ENCODE measurements at regions of chr12 and their contacts with region 1.

Region 1: GRCh38 chr12:109597795-109598427 is 24.3 kb downstream of the MVK start:
- DNase-seq: peak; percentile 61
- H3K4me3 ChIP-seq: no peak overlapping the region
- H3K27ac ChIP-seq: no peak overlapping the region
- H3K27me3 ChIP-seq: peaks cover 9% of the 10 kb centered on the region
- CTCF ChIP-seq: peak; percentile 97

Region 2: DNA sequence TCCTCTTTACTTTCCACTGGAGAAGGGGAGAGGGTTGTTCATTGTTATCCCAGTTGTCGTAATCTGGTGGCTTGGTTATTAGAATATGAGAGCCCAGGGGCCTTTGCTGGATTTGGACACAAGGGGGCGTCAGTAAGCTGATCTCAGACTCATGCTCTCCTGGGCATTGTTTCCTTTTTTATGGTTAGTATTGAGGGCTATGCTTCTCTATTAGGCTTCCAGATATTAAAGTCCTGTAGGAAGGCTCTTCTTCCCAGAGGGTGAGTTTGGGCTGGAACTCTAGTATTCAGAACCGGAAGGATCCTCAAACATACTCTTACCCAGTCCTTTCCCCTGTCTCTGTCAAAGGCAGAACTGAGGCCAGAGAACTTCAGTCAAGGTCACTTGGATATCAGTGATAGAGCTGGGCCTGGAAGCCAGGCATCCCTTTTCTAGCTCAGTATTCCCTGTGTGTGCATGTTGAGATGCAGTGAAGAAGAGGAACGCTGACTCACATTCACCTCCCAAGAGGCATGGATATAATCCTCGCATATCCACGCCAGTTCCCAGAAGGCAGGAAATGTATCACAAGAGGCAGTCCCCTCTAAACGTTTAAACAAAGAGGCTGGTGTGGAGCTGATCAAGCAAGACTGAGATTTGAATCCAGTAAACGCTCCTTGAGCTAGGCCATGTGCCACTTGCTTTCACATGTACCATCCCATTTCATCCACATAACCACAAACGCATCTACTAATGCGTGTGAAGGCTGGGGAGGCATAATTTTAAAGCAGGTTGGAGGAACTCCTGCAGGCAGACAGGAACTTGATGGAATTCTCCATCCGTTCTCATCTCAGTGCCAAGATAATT is 78.9 kb before region 1 on chr12:
- CTCF ChIA-PET with region 1: interaction called, 13 read pairs
- POLR2A ChIA-PET with region 1: no interaction called
- DNase-seq: peak; percentile 41
- H3K4me3 ChIP-seq: no peak overlapping the region
- H3K27ac ChIP-seq: peak overlapping the region; percentile 94
- H3K27me3 ChIP-seq: no peaks in the 10 kb centered on the region
- CTCF ChIP-seq: peak; percentile 93

Region 3: GRCh38 chr12:109566424-109566823 is 31.5 kb before region 1 on chr12:
- CTCF ChIA-PET with region 1: interaction called, 11 read pairs
- POLR2A ChIA-PET with region 1: no interaction called
- DNase-seq: no peak
- H3K4me3 ChIP-seq: no peak overlapping the region
- H3K27ac ChIP-seq: no peak overlapping the region
- H3K27me3 ChIP-seq: no peaks in the 10 kb centered on the region
- CTCF ChIP-seq: no peak

Region 4: DNA sequence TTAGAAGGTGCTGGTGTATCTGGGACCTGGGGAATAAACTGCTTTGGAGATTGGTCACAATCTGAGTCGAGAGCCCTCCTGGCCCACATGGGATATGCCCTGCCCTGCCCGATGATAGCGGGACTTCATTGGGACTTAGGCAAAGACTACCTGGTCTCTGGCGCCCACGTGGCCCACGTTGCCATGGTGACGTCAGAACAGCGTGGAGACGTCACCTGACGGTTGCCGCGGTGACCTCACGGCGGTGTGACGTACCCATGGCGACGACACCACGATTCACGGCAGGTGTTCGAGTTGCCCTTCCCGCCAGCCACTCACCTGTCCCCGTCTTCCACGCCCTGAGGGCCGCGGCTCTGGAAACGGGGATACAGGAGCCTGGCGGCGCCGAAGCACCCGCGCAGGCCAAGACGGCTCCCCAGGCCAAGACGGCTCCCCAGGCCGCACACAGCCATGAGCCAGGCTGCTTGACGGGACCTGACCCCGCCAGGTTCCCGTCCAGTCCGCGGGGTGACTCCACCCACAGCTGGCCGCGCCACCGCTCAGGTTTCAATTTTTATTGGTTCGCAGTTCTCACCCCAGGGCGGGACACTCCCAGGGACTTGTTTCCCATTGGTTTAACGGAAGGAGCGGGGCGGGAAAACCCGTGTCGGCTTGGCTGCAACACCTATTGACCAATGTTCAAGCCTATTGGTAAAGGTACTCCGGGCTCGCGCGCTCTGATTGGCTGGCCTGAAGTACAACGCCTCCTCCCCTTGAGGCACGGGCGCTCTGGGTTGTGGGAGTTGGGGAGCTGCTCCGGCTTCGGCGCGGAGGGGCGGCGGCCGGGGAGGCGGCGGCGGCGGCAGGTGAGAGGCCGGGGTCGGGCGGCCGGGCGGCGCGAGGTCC is 24.6 kb before region 1 on chr12 and contains the starts of genes MMAB and MVK:
- CTCF ChIA-PET with region 1: interaction called, 36 read pairs
- POLR2A ChIA-PET with region 1: interaction called, 3 read pairs
- DNase-seq: peak; percentile 96
- H3K4me3 ChIP-seq: peak within 1 kb of the TSS; percentile 78
- H3K27ac ChIP-seq: peak within 1 kb of the TSS; percentile 68
- H3K27me3 ChIP-seq: no peaks in the 10 kb centered on the region
- CTCF ChIP-seq: no peak
- polyA plus RNA-seq, gene MMAB: 13.0 and 15.1 TPM in 2 replicates
- polyA plus RNA-seq, gene MVK: 4.7 and 5.9 TPM in 2 replicates

Region 5: DNA sequence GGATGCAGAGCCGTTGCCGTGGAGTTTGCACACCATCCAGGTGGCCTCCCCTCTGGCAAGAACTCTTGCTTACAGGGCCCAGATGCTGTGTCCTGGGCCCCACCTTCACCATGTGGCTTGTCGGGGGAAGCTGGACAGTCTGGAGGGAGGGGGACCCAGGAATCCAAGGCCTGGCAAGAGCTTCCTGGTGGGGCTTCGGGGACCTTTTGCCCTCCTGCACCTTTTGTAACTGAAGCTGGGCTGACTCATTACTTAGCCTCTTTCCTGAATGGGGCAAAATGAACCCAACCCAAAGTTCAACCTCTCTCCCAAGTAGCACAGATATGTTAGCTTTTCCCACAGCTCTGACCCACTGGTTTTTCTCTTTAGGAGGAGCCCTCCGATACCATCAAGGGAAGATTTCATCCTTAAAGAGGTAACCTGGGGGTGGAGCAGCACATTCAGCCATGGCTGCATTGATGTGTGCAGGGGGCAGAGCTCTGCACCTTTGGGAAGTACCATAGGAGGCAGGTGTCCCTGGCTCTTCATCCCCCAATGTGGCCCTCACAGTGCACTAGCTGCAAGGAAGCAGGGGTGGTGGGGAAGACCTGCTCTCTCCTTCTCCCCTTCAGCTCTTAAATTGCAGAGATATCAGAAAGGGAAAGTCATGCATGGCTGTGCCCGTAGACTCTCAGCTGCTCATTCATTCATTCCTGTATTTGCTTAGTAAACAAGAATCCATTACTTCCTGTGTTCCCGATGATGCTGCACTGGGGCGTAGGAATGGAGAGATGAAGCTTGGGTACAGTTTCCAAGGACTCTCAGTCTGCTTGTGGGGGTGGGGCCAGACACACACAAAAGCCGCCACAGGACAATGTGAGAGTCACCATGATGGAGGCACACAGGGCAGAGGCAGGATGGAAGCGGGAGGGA is 11.3 kb before region 1 on chr12:
- CTCF ChIA-PET with region 1: interaction called, 31 read pairs
- POLR2A ChIA-PET with region 1: no interaction called
- DNase-seq: no peak
- H3K4me3 ChIP-seq: no peak overlapping the region
- H3K27ac ChIP-seq: no peak overlapping the region
- H3K27me3 ChIP-seq: no peaks in the 10 kb centered on the region
- CTCF ChIP-seq: no peak

Region 6: DNA sequence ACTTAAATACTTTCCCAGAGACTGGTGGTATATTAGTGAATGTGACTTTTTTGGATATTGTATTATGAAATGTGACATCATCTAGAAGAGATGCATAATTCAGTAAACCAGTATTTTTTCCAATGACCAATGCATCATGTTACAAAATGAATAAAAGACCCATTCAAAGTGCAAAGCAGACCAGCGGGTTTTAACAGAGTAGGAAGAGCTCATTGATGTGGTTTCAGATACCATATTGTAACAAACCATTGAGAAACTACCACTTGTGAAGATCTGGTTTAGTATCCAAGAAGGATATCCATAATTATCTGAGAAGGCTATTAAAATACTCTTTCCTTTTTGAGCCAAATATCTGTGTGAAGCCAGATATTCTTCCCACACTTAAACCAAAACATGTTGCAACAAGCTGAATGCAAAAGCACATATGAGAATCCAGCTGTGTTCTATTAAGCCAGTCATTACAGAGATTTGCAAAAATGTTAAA is 23.3 kb after region 1 on chr12:
- CTCF ChIA-PET with region 1: interaction called, 10 read pairs
- POLR2A ChIA-PET with region 1: no interaction called
- DNase-seq: no peak
- H3K4me3 ChIP-seq: no peak overlapping the region
- H3K27ac ChIP-seq: no peak overlapping the region
- H3K27me3 ChIP-seq: peaks cover 28% of the 10 kb centered on the region
- CTCF ChIP-seq: no peak

Region 7: DNA sequence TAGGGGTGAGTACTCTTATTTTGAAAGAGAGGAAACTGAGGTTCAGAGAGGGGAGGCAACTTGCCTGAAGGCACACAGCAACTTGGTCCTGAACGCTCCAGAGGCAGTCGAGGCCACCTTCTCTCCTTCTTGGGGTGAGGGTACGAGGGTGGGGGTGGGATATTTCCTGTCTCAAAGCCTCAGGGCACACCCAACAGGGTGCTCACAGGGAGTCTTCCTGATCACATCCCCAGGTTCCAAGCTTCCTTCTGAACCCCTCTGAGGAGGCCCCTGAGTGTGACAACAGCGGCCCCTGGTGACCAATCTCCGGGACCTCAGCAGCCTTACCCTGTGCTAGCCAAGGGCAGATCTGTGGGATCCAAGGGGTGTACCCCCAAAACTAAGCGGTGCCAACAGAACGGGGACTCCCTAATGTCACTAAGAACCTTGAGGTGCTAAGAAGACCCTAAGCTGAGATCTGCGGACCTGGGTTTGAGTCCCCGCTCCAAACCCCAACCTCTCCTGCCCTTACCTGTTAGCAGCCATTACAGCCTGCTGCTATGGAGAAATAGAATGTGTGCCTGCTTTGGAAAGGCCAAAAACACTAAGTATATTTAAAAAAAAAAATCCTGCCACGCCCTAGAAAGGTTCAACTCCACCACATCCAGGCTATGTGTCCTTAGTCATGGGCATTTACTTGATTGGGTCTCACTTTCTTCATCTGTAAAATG is 177.4 kb after region 1 on chr12:
- CTCF ChIA-PET with region 1: interaction called, 201 read pairs
- POLR2A ChIA-PET with region 1: no interaction called
- DNase-seq: peak; percentile 30
- H3K4me3 ChIP-seq: no peak overlapping the region
- H3K27ac ChIP-seq: no peak overlapping the region
- H3K27me3 ChIP-seq: peaks cover 6% of the 10 kb centered on the region
- CTCF ChIP-seq: peak; percentile 96